ENCODE measurements at regions of chr9 and their contacts with region 1.

Region 1: GRCh38 chr9:27529316-27530278 is at the start of gene MOB3B:
- DNase-seq: peak; percentile 42 to 86 (median 67)
- ATAC-seq: peak; percentile 91
- H3K4me3 ChIP-seq: peak within 1 kb of the TSS; percentile 59
- H3K4me3 Mint-ChIP-seq: peak within 1 kb of the TSS; percentile 89 to 96 (median 94)
- H3K27ac ChIP-seq: peak within 1 kb of the TSS; percentile 45
- H3K27ac Mint-ChIP-seq: peak within 1 kb of the TSS in 8 of 9 donors; percentile 38 to 81 (median 63)
- H3K4me1 ChIP-seq: no peaks in the 10 kb centered on the region
- H3K4me1 Mint-ChIP-seq: peaks cover 0 to 18% (median 5%) of the 10 kb centered on the region in 7 donors
- H3K27me3 ChIP-seq: no peaks in the 10 kb centered on the region
- H3K27me3 Mint-ChIP-seq: peaks cover 0 to 31% (median 0%) of the 10 kb centered on the region in 5 donors
- total RNA-seq, gene MOB3B: 0.29 to 1.8 (median 0.76) TPM

Region 2: DNA sequence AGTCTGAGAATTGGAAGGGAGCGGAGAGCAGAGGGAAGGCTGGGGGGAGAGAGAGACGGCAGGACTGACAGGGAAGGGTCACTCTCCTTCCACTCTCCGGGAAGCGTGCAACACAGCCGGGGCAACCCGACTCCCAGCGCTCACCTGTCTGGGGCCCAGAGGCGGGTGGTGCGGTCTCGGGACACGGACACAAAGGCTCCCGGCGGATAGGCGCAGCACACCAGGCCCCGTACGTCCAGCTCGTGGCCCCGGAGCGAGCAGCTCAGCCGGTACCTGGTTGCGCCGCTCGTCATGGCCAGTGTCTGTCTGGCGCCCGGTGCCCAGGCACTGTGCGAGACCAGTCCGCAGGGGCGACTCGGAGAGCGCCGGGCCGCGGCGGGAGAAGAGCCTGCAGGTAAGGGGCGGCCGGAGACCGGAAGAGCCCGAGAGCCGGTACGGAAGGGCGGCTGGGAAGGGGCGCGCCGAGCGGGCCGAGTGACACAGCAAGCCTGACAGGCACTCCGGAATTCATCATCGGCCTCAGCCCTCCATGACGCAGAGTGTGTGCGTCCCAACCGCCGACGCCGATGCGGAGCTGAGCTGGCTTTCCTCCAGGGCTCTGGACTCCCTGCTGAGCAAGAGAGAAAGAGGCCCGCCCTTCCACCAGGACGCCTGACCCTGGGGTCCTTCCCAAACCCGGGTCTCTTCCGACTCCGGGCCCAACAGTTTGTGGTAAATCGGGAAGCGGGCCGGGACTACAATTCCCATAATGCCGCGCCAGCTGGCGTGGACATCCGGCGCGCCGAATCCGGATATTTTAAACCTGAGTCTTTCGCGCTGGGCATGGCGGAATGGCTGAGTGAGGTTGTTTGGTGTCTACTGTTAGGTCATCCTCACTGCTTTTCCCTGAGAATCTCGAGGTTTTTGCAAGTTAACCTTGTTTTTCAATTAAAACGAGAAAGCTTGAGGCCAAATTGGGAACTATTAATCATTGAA is 582.6 kb before region 1 on chr9 and contains the start of gene PLAA:
- CTCF ChIA-PET with region 1: no interaction called
- POLR2A ChIA-PET with region 1: no interaction called
- intact Hi-C with region 1: loop called in 1 of 2 experiments (anchors 2 kb)
- DNase-seq: peak; percentile 81 to 92 (median 88)
- ATAC-seq: peak; percentile 97
- H3K4me3 ChIP-seq: peak within 1 kb of the TSS; percentile 100
- H3K4me3 Mint-ChIP-seq: peak within 1 kb of the TSS; percentile 91 to 99 (median 95)
- H3K27ac ChIP-seq: peak within 1 kb of the TSS; percentile 99
- H3K27ac Mint-ChIP-seq: peak within 1 kb of the TSS; percentile 97 to 100 (median 99)
- H3K4me1 ChIP-seq: peaks cover 22 to 28% of the 10 kb centered on the region in 2 donors
- H3K4me1 Mint-ChIP-seq: peaks cover 33 to 54% (median 50%) of the 10 kb centered on the region in 7 donors
- H3K27me3 ChIP-seq: no peaks in the 10 kb centered on the region
- H3K27me3 Mint-ChIP-seq: peaks cover 0 to 11% (median 0%) of the 10 kb centered on the region in 5 donors
- total RNA-seq, gene PLAA: 22.4 to 33.6 (median 24.7) TPM

Region 3: GRCh38 chr9:27353474-27354229 is 175.9 kb before region 1 on chr9:
- CTCF ChIA-PET with region 1: interaction called, 3 read pairs
- POLR2A ChIA-PET with region 1: no interaction called
- intact Hi-C with region 1: loop called in 1 of 2 experiments (anchors 5 kb)
- DNase-seq: no peak
- ATAC-seq: no peak
- H3K4me3 ChIP-seq: no peak overlapping the region
- H3K4me3 Mint-ChIP-seq: no peak overlapping the region
- H3K27ac ChIP-seq: no peak overlapping the region
- H3K27ac Mint-ChIP-seq: peak overlapping the region in 1 of 9 donors; percentile 62
- H3K4me1 ChIP-seq: no peaks in the 10 kb centered on the region
- H3K4me1 Mint-ChIP-seq: peaks cover 0 to 48% (median 8%) of the 10 kb centered on the region in 7 donors
- H3K27me3 ChIP-seq: no peaks in the 10 kb centered on the region
- H3K27me3 Mint-ChIP-seq: no peaks in the 10 kb centered on the region

Region 4: DNA sequence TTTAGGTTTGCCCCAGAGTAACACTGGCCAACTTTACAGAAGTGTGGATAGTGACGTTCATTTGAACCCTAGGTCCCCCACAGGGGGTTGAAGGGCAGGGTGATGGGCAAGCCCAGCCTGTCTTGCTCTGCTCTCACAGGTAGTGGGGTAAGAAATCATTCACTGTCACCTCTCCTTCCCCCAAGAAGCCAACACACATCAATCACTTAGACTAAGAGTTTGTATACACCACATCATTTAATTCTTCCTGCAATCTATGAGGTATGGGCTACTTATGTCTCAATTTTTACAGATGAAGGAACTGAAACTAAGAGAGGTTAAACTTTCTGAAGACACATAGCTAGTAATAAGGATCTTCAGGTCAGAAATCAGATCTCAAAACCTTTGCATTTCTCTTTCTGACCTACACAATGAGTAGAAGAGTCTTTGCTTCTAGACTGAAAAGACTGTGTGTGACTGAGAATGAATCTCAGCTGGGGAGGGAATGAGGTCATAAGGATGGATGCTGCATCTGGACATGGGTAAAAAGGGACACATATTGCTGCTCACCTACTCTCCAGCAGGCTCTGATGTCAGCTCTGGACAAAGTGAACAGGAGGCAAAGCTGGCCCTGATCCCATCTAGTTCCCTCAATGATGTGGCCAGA is 151.7 kb before region 1 on chr9:
- CTCF ChIA-PET with region 1: no interaction called
- POLR2A ChIA-PET with region 1: no interaction called
- intact Hi-C with region 1: loop called in 1 of 2 experiments (anchors 1 kb)
- DNase-seq: no peak
- ATAC-seq: peak; percentile 64
- H3K4me3 ChIP-seq: no peak overlapping the region
- H3K4me3 Mint-ChIP-seq: no peak overlapping the region
- H3K27ac ChIP-seq: no peak overlapping the region
- H3K27ac Mint-ChIP-seq: peak overlapping the region in 1 of 9 donors; percentile 20
- H3K4me1 ChIP-seq: no peaks in the 10 kb centered on the region
- H3K4me1 Mint-ChIP-seq: peaks cover 4 to 31% (median 5%) of the 10 kb centered on the region in 7 donors
- H3K27me3 ChIP-seq: no peaks in the 10 kb centered on the region
- H3K27me3 Mint-ChIP-seq: peaks cover 0 to 9% (median 0%) of the 10 kb centered on the region in 5 donors

Region 5: DNA sequence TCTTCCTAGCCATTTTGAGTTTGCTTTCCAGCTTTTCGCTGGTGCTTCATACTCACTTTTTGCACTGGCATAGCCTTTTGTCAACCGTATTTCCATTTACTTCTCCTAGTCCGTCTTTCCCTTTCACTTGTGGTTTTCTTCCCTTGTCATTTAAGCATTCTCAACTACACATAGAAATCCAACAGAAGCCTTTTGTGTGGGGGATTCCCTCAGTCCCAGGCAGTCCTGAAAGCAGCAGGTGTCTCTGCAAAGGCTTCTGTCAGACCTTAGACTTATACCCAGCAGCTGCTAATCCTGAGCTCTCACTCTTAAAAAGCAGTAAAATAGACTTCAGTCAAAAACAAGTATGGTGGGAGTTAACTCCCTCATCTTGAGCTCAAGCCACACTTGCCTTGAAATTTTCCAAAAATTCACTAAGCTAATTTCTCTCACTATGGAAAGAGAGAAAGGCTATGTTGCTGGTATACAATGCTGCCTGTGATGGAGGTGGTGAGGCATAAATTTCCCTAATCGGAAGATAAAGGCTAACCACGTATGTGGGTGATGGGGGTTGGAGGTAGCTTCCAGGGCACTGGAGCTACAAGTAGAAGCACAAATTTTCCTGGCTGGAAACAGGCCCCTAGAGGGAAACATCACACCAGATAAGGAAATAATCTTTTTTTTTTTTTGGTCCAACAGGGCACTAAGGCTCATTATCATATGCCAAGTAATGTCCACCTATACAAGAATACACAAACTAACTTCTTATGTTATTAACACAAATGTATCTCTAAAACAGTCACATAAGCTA is 40.3 kb before region 1 on chr9:
- CTCF ChIA-PET with region 1: no interaction called
- POLR2A ChIA-PET with region 1: no interaction called
- intact Hi-C with region 1: loop called (anchors 2 to 5 kb)
- DNase-seq: no peak
- ATAC-seq: no peak
- H3K4me3 ChIP-seq: no peak overlapping the region
- H3K4me3 Mint-ChIP-seq: no peak overlapping the region
- H3K27ac ChIP-seq: no peak overlapping the region
- H3K27ac Mint-ChIP-seq: no peak overlapping the region
- H3K4me1 ChIP-seq: peaks cover 8 to 14% of the 10 kb centered on the region in 2 donors
- H3K4me1 Mint-ChIP-seq: peaks cover 11 to 30% (median 16%) of the 10 kb centered on the region in 7 donors
- H3K27me3 ChIP-seq: no peaks in the 10 kb centered on the region
- H3K27me3 Mint-ChIP-seq: no peaks in the 10 kb centered on the region

Region 6: DNA sequence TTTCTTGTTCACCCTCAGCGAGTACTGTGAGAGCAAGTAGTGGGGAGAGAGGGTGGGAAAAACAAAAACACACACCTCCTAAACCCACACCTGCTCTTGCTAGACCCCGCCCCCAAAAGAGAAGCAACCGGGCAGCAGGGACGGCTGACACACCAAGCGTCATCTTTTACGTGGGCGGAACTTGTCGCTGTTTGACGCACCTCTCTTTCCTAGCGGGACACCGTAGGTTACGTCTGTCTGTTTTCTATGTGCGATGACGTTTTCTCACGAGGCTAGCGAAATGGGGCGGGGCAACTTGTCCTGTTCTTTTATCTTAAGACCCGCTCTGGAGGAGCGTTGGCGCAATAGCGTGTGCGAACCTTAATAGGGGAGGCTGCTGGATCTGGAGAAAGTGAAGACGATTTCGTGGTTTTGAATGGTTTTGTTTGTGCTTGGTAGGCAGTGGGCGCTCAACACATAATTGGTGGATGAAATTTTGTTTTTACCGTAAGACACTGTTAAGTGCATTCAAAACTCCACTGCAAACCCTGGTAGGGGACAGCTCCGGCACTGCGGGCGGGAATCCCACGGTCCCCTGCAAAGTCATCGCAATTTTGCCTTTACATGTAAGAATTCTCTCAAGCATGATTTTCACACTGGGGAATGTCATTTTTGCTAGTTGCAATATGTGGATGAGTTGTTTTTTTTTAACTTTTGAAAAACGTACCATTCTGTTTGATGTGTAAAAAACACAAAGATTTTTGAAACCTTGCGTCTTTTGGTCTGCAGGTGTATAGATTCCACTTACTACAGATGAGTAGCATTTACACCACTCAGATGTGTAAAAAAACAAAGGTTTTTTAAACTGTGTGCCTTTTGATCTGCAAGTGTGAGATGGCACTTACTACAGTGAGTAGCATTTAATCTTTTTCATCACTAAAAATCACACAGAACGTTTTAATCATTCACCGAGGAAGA is 44.3 kb after region 1 on chr9:
- CTCF ChIA-PET with region 1: interaction called, 3 read pairs
- POLR2A ChIA-PET with region 1: no interaction called
- intact Hi-C with region 1: loop called (anchors 1 kb)
- DNase-seq: peak; percentile 74 to 99 (median 98)
- ATAC-seq: peak; percentile 87
- H3K4me3 ChIP-seq: peak overlapping the region; percentile 79
- H3K4me3 Mint-ChIP-seq: peak overlapping the region; percentile 91 to 98 (median 97)
- H3K27ac ChIP-seq: peak overlapping the region; percentile 99
- H3K27ac Mint-ChIP-seq: peak overlapping the region; percentile 96 to 100 (median 99)
- H3K4me1 ChIP-seq: peaks cover 6 to 10% of the 10 kb centered on the region in 2 donors
- H3K4me1 Mint-ChIP-seq: peaks cover 16 to 46% (median 32%) of the 10 kb centered on the region in 7 donors
- H3K27me3 ChIP-seq: no peaks in the 10 kb centered on the region
- H3K27me3 Mint-ChIP-seq: peaks cover 0 to 4% (median 0%) of the 10 kb centered on the region in 5 donors

Region 7: DNA sequence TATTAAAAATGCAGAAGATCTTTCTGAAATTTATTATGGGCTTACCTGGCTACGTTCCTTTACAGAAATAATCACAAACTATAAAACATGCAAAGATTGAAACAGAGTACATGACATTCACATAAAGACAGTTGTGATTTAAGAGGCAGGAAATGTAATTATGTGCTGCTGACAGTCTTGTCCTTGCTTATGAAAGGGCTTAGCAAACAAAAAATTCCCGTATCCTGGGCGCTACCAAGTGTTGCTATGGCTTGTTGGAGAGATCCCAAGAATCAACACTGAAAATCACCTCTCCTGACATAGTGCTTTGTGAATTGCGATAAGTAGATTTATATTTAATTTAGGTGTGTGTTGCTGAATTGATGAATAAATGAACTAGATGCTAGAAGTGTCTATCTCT is 396.2 kb after region 1 on chr9:
- CTCF ChIA-PET with region 1: no interaction called
- POLR2A ChIA-PET with region 1: no interaction called
- intact Hi-C with region 1: no loop called
- DNase-seq: no peak
- ATAC-seq: no peak
- H3K4me3 ChIP-seq: no peak overlapping the region
- H3K4me3 Mint-ChIP-seq: no peak overlapping the region
- H3K27ac ChIP-seq: no peak overlapping the region
- H3K27ac Mint-ChIP-seq: no peak overlapping the region
- H3K4me1 ChIP-seq: no peaks in the 10 kb centered on the region
- H3K4me1 Mint-ChIP-seq: no peaks in the 10 kb centered on the region
- H3K27me3 ChIP-seq: no peaks in the 10 kb centered on the region
- H3K27me3 Mint-ChIP-seq: no peaks in the 10 kb centered on the region